ENCODE measurements at regions of chr1 and their contacts with region 1.

Region 1: DNA sequence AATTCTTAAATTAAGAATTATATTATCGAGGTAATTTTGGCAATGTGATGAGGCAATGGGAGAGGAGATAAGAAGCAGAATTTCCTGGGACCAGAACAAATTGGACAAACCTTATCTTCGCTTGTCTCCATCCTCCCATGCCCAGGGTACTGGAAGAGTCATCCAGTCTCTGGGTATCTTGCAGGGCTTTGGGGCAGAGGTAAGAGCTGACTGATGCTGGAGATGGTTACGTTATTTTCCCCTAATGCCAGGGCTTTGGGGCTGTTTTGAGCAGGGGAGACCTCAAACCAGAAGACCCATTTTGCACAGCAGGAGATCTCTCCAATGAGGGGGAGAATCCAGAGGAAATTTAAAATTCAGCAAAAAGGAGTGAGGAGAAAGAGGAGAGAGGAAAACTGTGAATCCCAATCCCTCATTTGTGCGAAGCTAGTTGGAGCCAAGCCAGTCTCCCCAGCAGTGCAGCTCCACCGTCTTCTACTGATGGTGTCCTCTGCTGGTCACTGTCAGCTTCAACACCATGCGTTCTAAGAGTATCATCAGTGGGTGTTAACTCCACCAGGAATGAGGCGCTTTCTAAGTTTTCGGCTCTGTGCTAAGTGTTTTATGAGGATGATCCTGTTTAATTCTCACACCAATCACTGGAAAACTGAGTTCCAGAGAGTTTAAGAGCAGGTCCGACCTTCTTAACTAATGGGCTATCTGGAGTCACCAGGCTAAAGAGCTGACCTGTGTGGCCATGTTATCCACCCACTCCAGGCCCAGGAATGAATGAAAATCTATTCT is 86.8 kb upstream of the CD34 start:
- DNase-seq: peak; percentile 74
- H3K4me3 ChIP-seq: no peak overlapping the region
- H3K27ac ChIP-seq: no peak overlapping the region
- H3K4me1 ChIP-seq: peaks cover 0 to 3% of the 10 kb centered on the region in 2 experiments; a peak in 2 of 4 replicates
- H3K27me3 ChIP-seq: no peaks in the 10 kb centered on the region
- CTCF ChIP-seq: peak; percentile 81
- EP300 ChIP-seq: no peak
- RAD21 ChIP-seq: peak; percentile 60

Region 2: GRCh38 chr1:207987164-207987563 is 10.5 kb before region 1 on chr1:
- CTCF ChIA-PET with region 1: interaction called, 21 read pairs
- POLR2A ChIA-PET with region 1: no interaction called
- DNase-seq: no peak
- H3K4me3 ChIP-seq: no peak overlapping the region
- H3K27ac ChIP-seq: no peak overlapping the region
- H3K4me1 ChIP-seq: no peaks in the 10 kb centered on the region; a peak in 1 of 4 replicates
- H3K27me3 ChIP-seq: no peaks in the 10 kb centered on the region
- CTCF ChIP-seq: no peak
- EP300 ChIP-seq: no peak
- RAD21 ChIP-seq: no peak

Region 3: DNA sequence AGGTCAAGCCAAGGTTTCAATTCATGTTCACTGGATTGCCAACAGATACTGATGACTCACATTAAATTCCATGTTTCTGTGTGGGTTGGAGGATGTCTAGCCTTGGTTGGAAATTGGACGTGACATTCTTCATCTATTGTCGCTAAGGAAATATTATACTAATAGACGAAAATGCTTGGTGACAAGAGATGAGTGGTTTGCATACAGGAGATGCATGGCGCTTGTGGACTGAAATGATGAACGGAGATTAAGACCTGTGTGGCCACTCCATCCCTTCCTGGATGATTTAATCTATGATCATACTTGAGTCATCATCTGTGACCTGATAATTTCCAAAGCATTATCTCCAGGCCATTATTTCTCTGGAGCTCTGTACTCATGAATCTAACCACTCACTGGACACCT is 10.3 kb after region 1 on chr1:
- CTCF ChIA-PET with region 1: interaction called, 36 read pairs
- POLR2A ChIA-PET with region 1: no interaction called
- DNase-seq: no peak
- H3K4me3 ChIP-seq: no peak overlapping the region; a peak in 1 of 4 replicates
- H3K27ac ChIP-seq: peak overlapping the region; percentile 53 to 97; a peak in 3 of 4 replicates
- H3K4me1 ChIP-seq: peaks cover 17 to 18% of the 10 kb centered on the region in 2 experiments
- H3K27me3 ChIP-seq: no peaks in the 10 kb centered on the region
- CTCF ChIP-seq: no peak
- EP300 ChIP-seq: peak; percentile 83 to 98
- RAD21 ChIP-seq: no peak

Region 4: DNA sequence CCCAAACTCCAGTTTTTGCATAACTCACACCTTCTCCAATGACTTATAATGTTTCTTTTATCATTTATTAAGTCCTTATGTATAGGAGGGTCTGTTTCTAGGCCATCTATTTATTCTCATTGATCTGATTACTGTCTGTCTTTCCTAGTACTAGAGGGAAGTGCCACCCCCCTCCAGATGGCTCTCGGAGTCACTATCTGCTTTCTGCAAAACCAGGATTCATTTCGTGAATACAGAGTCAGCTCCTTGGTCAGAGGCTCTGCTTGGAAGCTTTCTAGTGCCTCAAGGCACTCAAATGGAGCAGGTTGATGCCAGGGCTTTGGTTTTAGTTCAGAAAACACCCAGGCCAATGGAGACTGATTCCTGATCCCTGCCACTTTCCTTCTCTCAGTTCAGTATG is 15.5 kb after region 1 on chr1:
- CTCF ChIA-PET with region 1: interaction called, 36 read pairs
- POLR2A ChIA-PET with region 1: no interaction called
- DNase-seq: peak; percentile 76
- H3K4me3 ChIP-seq: no peak overlapping the region
- H3K27ac ChIP-seq: peak overlapping the region in 1 of 2 experiments; percentile 43; a peak in 1 of 4 replicates
- H3K4me1 ChIP-seq: peaks cover 4 to 24% of the 10 kb centered on the region in 2 experiments; a peak in 2 of 4 replicates
- H3K27me3 ChIP-seq: no peaks in the 10 kb centered on the region
- CTCF ChIP-seq: no peak
- EP300 ChIP-seq: peak in 1 of 2 experiments; percentile 53; a peak in 2 of 4 replicates
- RAD21 ChIP-seq: peak; percentile 12; the same call in 1 of the 2 replicates

Region 5: DNA sequence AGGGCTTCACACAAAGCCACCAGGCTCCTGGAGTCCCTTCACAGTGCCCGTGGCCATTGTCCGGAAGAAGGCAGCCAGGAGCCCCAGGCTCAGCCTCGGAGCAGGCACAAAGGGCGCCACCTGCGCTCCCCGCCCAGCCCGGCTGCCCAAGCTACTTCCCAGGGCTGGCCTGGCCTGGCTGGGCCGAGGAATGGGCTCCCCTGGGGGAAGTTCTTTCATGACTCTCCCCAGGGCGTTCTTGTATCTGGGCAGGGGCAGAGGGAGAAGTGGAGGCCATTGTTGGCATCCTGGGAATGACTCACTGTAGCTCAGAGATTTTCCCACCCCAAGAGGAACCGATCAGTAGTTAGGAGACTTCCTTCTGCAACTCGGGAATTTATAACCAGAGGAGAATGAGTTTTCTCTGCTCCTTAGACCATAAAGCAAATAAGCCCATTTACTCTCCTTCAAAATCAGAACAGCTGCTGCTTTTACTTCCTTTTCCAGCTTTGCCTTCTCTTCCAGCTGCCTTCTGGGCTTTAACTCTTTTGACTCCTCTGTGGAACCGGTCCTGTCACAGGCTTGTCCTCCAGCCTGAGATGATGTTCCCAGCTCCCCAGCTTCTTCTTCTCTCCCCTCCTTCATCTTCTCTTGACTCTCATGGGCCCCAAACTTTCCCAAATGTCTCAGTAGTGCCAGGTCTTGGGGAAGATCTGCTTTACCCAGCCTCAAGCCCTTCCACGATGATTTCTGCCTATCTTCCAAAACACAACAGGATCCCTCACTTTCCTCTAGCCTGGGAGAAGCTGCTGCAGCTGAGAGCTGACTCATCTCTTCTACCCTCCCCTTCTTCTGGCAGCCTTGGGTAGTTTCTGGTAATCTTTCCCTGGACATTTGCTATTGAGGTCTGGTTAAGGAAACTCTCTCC is 32.0 kb after region 1 on chr1:
- CTCF ChIA-PET with region 1: interaction called, 20 read pairs
- POLR2A ChIA-PET with region 1: no interaction called
- DNase-seq: no peak
- H3K4me3 ChIP-seq: no peak overlapping the region
- H3K27ac ChIP-seq: peak overlapping the region in 1 of 2 experiments; percentile 90; a peak in 2 of 4 replicates
- H3K4me1 ChIP-seq: peaks cover 6 to 19% of the 10 kb centered on the region in 2 experiments; a peak in 3 of 4 replicates
- H3K27me3 ChIP-seq: no peaks in the 10 kb centered on the region
- CTCF ChIP-seq: no peak
- EP300 ChIP-seq: no peak; a peak in 1 of 4 replicates
- RAD21 ChIP-seq: no peak